Mucosa of descending colon (tissue), 3 donors: ENCODE measurements at regions of chr6 and their contacts with region 1.

Region 1: GRCh38 chr6:37691904-37692806 is 5.5 kb downstream of the MDGA1 start:
- DNase-seq: peak; percentile 65 to 87 (median 86)
- ATAC-seq: peak; percentile 91
- H3K4me3 ChIP-seq: no peak overlapping the region
- H3K4me1 ChIP-seq: peaks cover 11% of the 10 kb centered on the region
- CTCF ChIP-seq: peak; percentile 98

Region 2: GRCh38 chr6:37324131-37325033 is 367.8 kb before region 1 on chr6:
- intact Hi-C with region 1: loop called in 1 of 2 experiments (anchors 10 kb)
- DNase-seq: no peak
- ATAC-seq: peak; percentile 45
- H3K4me3 ChIP-seq: no peak overlapping the region
- H3K4me1 ChIP-seq: peaks cover 6% of the 10 kb centered on the region
- CTCF ChIP-seq: no peak

Region 3: DNA sequence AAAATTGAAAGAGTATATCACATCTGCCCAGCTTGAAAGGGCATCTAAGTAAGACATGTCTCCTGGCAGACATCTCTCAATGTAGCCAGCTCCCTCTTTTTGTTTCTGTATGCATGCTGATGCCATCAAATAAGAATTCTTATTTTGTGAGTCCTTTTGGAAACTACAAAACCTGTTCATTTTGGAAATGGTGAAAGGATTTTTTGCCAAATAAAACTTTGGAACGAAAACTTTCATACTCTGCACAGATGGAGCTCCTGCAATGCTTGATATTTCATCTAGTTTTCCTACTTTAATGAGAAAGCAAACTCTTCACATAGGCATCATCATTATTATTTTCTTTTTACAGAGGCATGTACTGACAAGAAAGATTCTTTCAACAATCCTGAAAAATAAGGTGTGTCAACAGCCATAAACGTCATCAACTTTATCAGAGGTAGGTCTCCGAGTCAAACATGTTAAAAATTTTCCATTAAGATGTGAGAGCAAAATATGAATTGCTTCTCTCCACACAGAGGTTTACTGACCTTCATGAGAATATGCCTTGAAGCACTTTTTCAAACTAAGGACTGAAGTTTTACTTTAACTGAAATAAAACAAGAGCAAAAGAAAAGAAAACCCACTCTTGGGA is 285.3 kb before region 1 on chr6:
- intact Hi-C with region 1: no loop called
- DNase-seq: no peak
- ATAC-seq: no peak
- H3K4me3 ChIP-seq: no peak overlapping the region
- H3K4me1 ChIP-seq: no peaks in the 10 kb centered on the region
- CTCF ChIP-seq: no peak

Region 4: GRCh38 chr6:37653933-37654565 is 38.1 kb before region 1 on chr6:
- intact Hi-C with region 1: no loop called
- DNase-seq: peak in 2 of 3 donors; percentile 39 to 74
- ATAC-seq: peak; percentile 72
- H3K4me3 ChIP-seq: no peak overlapping the region
- H3K4me1 ChIP-seq: peaks cover 1% of the 10 kb centered on the region
- CTCF ChIP-seq: no peak

Region 5: DNA sequence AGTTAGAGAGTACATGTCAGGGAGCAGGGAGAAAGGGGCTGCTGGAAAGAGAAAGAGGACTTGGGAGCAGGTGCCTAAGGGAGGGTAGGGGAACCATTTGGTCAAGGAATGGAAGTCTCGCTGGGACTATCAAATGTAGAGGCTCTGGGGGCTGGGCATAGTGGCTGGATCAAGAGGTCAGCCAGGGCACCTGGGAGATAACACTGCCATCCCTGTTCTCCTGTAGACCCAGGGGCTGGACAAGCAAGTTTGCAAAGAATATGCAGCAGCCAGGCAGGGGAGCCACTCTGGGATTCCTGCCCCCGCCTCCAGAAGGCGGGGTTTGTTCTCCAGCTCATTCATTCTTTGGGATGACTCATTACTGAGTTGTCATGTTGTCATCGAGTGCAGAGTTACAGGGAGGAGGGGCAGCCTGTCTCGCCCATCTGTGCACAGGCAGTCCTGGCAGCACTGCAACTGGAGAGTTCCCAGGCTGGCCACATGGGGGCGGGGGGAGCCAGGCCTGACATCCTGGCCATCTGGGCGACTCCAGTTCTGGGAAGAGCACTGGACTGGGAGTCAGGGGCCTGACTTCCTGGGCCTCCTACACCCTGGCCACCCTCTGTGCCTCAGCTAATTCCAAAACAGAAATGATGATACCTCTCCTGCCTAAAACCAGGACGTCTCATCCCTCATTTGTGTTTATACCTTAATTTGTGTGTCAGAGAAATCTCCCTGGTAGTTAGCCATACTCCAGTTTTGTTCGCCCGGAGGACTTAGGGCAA is 99.2 kb after region 1 on chr6:
- intact Hi-C with region 1: no loop called
- DNase-seq: peak; percentile 90 to 93 (median 91)
- ATAC-seq: peak; percentile 100
- H3K4me3 ChIP-seq: no peak overlapping the region
- H3K4me1 ChIP-seq: peaks cover 4% of the 10 kb centered on the region
- CTCF ChIP-seq: peak; percentile 90